Activated CD8-positive, alpha-beta memory T cell treated with anti-CD3 and anti-CD28 coated beads, Interleukin-2, amount 10 ng/mL, durations not matched to agents 7 days and 5 days (primary cell): ENCODE measurements at regions of chr6 and their contacts with region 1.

Region 1: GRCh38 chr6:43383021-43383667 is 13.7 kb upstream of the ZNF318 start:
- DNase-seq: no peak
- ATAC-seq: no peak
- H3K4me3 Mint-ChIP-seq: peak overlapping the region; percentile 40
- H3K27ac Mint-ChIP-seq: peak overlapping the region; percentile 90
- H3K4me1 Mint-ChIP-seq: peaks cover 40% of the 10 kb centered on the region
- H3K27me3 Mint-ChIP-seq: peaks cover 27% of the 10 kb centered on the region

Region 2: DNA sequence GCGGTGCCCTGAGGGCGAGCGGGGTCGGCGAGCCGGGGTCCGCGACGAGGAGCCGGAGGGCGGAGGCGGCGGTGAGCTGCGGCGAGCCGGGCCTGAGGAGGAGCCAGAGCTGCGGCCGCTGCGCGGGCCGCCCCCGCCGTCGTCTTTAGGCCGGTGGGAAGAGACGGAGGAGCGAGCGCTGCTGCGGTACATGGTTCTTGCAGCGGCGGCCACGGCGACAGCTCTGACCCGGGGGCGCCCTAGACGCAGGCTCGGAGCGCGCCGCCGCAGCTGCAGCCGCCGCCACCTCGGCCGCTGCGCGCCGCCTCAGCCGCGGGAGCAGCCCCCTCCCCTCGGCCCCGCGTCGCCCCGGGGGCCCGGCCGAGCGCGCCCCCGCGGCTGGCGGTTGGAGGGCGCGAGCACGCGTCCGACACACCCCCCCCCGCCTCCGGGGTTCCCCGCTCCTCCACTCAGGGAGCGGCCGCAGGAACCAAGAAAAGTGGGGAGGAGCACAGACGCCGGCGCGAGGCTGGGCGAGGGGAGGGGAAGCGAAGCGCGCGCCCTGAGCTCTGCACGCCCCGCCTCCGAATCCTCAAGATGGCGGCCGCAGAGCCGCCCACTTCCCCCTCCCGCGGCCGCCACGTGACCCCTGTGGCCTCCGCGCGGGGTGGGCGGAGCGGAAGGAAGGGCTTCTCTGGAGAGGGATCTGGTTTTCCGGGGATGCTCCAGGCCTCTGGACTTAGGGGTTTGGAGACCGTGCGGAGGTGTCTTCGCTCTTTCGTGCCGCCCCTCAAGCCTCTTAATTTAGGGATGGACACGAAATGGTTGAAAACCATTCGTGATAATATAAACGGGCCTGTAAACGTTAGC is 13.7 kb before region 1 on chr6 and contains the start of gene ZNF318:
- CTCF ChIA-PET with region 1: interaction called, 49 read pairs
- DNase-seq: peak; percentile 96
- ATAC-seq: peak; percentile 96
- H3K4me3 Mint-ChIP-seq: peak within 1 kb of the TSS; percentile 79
- H3K27ac Mint-ChIP-seq: peak within 1 kb of the TSS; percentile 92
- H3K4me1 Mint-ChIP-seq: peaks cover 26% of the 10 kb centered on the region
- H3K27me3 Mint-ChIP-seq: peaks cover 9% of the 10 kb centered on the region
- total RNA-seq, gene ZNF318: 9.7 to 12.8 TPM

Region 3: DNA sequence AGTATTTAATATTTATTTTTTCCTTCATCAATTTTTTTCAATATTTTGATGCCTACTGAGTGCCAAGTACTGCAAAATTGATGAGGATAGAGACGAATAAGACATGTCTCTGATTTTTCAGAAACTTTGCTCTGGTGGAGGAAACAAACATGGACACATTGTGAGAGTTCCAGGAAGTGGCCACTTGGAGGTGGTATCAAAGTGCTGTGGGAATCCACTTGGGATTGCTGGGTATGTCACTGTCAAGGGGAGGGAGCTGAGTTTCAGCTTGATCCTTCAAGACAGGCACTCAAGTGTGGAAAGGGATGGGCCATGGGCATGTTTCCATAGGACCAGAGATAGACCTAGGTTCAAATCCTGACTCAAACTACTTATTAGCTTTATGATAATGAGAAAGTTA is 19.7 kb after region 1 on chr6:
- CTCF ChIA-PET with region 1: interaction called, 13 read pairs
- DNase-seq: no peak
- ATAC-seq: no peak
- H3K4me3 Mint-ChIP-seq: no peak overlapping the region
- H3K27ac Mint-ChIP-seq: no peak overlapping the region
- H3K4me1 Mint-ChIP-seq: peaks cover 2% of the 10 kb centered on the region
- H3K27me3 Mint-ChIP-seq: peaks cover 25% of the 10 kb centered on the region